ENCODE measurements at regions of chr2 and their contacts with region 1.

Region 1: DNA sequence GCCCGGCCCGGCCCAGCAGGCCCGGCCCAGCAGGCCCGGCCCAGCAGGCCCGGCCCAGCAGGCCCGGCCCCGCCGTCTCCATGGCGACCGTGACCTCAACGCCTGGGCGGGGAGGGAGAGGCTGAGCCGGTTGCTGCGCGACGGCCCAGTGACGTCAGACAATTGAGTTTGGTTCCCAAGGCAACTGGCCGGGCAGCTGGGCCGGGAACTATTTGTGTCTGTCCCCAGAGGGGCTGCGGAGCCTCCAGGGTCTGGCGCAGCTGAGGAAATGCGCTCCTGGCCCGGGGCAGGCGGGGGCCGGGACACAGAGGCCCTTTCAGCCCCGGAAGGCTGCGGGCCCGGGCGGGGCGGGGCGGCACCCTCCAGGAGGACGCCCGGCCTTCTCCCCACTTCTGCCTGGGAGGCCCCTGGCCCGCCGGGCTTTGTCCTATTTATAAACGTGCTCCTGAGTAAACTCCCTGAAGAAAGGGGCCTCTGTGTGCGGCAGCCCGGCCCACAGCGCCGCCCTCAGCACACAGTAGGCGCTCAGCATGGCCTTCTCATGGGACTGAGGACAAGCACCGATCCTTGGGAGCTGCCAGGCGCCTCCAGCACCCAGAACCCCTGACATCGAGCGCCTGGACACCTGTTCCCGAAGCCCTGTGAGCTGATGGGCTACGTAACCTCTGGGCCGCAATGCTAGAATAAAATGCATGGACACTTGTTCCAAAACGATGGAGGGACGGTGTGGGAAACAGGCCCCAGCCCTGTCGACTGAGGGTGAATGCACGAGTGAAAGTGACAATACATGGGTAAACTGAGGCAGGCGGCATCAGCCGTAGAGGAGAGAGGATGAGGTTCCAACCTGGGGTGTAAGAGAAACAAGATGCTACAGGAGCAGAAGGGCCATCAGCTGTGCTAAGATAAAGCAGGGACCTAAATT is 12.3 kb downstream of the TEX44 start:
- DNase-seq: peak; percentile 94 to 97 (median 96)
- H3K4me3 ChIP-seq: peak overlapping the region in 1 of 2 donors; percentile 52
- H3K4me3 Mint-ChIP-seq: peak overlapping the region; percentile 69 to 82 (median 74)
- H3K27ac ChIP-seq: peak overlapping the region; percentile 89
- H3K27ac Mint-ChIP-seq: peak overlapping the region; percentile 89 to 97 (median 95)
- H3K4me1 ChIP-seq: peaks cover 14% of the 10 kb centered on the region
- H3K4me1 Mint-ChIP-seq: peaks cover 4 to 14% (median 10%) of the 10 kb centered on the region in 4 donors
- H3K27me3 ChIP-seq: no peaks in the 10 kb centered on the region
- H3K27me3 Mint-ChIP-seq: no peaks in the 10 kb centered on the region

Region 2: DNA sequence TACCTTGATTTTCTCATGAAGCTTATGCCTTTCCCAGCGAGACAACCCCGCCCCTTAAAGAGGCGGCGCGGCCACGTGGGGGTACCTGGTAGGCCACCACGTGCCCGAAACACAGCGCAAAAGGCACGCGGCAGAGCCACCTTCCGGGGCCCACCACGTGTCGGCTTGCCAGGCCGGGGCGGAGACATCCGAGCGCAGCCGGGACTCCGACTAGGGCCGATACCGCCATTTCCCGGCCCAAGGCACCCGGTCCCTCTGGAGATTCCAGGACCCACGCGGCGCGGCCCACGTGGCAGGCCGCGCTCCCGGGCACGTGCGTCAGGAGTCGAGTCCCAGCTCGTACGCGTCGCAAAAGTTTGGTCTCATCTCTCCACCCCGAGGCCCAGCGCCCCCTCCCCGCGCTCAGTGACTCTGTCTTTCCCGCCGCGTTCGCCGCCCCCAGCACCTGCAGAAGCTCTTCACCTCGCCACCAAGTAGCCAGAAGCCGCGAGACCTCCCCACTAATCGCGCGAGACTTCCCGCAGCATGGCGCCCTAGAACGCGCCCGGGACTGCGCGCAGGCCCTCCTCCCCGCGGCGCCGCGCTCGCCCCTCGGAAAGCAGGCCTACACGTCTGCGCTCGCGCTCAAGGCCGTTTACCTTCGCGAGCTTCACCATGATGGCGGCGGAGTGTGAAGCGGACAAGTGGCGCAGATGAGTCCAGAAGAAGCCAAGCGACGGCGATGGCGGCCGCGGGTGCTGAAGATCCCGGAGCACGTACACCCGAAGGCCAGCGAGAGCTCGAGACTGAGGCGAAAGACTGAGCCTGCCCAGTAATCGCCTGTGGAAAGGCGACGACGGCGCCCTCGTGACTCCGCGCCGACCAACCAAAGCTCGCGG is 141.0 kb before region 1 on chr2 and contains the start of gene NCL:
- CTCF ChIA-PET with region 1: interaction called, 3 read pairs
- POLR2A ChIA-PET with region 1: interaction called, 5 read pairs
- intact Hi-C with region 1: loop called (anchors 5 kb)
- DNase-seq: peak; percentile 90 to 96 (median 92)
- H3K4me3 ChIP-seq: peak within 1 kb of the TSS; percentile 77 to 92
- H3K4me3 Mint-ChIP-seq: peak within 1 kb of the TSS; percentile 92 to 98 (median 96)
- H3K27ac ChIP-seq: peak within 1 kb of the TSS; percentile 96
- H3K27ac Mint-ChIP-seq: peak within 1 kb of the TSS; percentile 99 to 100 (median 99)
- H3K4me1 ChIP-seq: peaks cover 51% of the 10 kb centered on the region
- H3K4me1 Mint-ChIP-seq: peaks cover 31 to 59% (median 45%) of the 10 kb centered on the region in 4 donors
- H3K27me3 ChIP-seq: no peaks in the 10 kb centered on the region
- H3K27me3 Mint-ChIP-seq: peaks cover 0 to 3% of the 10 kb centered on the region in 2 donors
- total RNA-seq, gene NCL: 380 to 390 TPM

Region 3: DNA sequence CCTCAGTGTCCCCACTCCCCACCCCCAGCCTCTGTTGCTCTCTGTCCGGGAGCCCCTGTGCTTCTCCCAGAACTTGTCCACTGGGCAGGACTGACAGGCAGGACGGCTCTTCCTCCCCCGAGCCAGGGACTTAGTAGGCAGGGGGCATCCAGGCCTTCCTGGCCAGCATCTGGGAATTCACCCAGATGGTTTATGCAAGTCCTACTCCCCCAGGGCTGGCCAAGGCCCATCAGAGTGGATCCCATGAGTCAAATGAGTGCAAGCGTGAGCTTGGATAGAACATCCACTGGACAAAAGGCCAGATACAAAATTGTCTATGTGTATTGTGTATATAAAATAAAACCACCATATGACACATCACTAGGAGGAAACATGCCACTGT is 82.2 kb before region 1 on chr2:
- CTCF ChIA-PET with region 1: interaction called, 27 read pairs
- POLR2A ChIA-PET with region 1: interaction called, 3 read pairs
- intact Hi-C with region 1: loop called (anchors 1 kb)
- DNase-seq: no peak
- H3K4me3 ChIP-seq: no peak overlapping the region
- H3K4me3 Mint-ChIP-seq: no peak overlapping the region
- H3K27ac ChIP-seq: no peak overlapping the region
- H3K27ac Mint-ChIP-seq: no peak overlapping the region
- H3K4me1 ChIP-seq: peaks cover 33% of the 10 kb centered on the region
- H3K4me1 Mint-ChIP-seq: peaks cover 17 to 48% (median 32%) of the 10 kb centered on the region in 4 donors
- H3K27me3 ChIP-seq: no peaks in the 10 kb centered on the region
- H3K27me3 Mint-ChIP-seq: no peaks in the 10 kb centered on the region

Region 4: GRCh38 chr2:231590619-231591018 is 14.3 kb before region 1 on chr2:
- CTCF ChIA-PET with region 1: interaction called, 19 read pairs
- POLR2A ChIA-PET with region 1: no interaction called
- intact Hi-C with region 1: no loop called
- DNase-seq: no peak
- H3K4me3 ChIP-seq: no peak overlapping the region
- H3K4me3 Mint-ChIP-seq: no peak overlapping the region
- H3K27ac ChIP-seq: no peak overlapping the region
- H3K27ac Mint-ChIP-seq: no peak overlapping the region
- H3K4me1 ChIP-seq: no peaks in the 10 kb centered on the region
- H3K4me1 Mint-ChIP-seq: no peaks in the 10 kb centered on the region
- H3K27me3 ChIP-seq: no peaks in the 10 kb centered on the region
- H3K27me3 Mint-ChIP-seq: peaks cover 0 to 6% of the 10 kb centered on the region in 2 donors

Region 5: DNA sequence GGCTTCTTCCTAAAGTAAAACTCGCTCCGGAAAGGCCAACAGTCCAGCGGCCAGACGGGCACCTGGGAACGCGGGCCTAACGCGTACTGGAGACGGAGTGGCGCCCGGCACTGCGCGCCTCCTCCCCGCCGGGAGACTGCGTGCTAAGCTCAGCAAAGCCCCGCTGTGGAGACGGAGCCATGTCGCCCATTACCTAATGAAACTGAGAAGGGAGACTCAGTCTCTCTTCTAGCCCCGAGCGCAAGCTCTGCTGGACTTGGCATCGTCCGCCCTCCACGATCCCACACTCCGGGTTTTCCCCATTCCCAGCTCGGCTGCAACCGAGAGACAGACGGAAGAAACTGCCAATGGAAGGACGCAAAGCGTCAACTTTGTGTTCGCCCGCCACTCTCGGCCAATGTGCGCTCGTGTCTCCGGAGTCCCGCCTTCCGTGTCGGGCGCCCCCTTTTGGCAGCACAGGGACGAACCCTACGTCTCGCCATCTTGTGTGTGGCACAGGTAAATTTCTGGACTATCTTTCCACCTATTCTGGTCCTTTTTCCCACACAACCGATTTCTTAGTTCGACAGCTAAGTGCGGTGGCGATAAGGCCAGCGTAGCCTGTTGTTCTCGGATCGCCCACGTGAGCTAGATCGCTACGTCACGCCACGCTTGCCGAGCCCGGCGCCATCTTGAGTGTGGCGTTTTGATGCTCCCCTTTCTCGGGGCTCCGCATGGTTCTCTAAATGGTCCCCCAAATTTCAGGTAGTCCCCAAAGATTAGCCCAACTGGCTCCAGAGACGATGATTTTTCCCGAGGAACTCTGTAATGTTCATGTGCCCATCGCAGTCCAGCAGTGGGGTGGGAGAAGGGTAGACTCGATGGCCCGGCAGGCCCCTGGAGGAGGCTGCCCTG is 102.0 kb after region 1 on chr2:
- CTCF ChIA-PET with region 1: interaction called, 155 read pairs
- POLR2A ChIA-PET with region 1: interaction called, 116 read pairs
- intact Hi-C with region 1: no loop called
- DNase-seq: peak; percentile 97 to 98 (median 98)
- H3K4me3 ChIP-seq: peak overlapping the region; percentile 90 to 96
- H3K4me3 Mint-ChIP-seq: peak overlapping the region; percentile 95 to 98 (median 97)
- H3K27ac ChIP-seq: peak overlapping the region; percentile 100
- H3K27ac Mint-ChIP-seq: peak overlapping the region; percentile 100
- H3K4me1 ChIP-seq: peaks cover 28% of the 10 kb centered on the region
- H3K4me1 Mint-ChIP-seq: peaks cover 10 to 54% (median 18%) of the 10 kb centered on the region in 4 donors
- H3K27me3 ChIP-seq: no peaks in the 10 kb centered on the region
- H3K27me3 Mint-ChIP-seq: peaks cover 0 to 6% of the 10 kb centered on the region in 2 donors